GM12878 (cell line): ENCODE measurements at regions of chr2 and their contacts with region 1.

Region 1: DNA sequence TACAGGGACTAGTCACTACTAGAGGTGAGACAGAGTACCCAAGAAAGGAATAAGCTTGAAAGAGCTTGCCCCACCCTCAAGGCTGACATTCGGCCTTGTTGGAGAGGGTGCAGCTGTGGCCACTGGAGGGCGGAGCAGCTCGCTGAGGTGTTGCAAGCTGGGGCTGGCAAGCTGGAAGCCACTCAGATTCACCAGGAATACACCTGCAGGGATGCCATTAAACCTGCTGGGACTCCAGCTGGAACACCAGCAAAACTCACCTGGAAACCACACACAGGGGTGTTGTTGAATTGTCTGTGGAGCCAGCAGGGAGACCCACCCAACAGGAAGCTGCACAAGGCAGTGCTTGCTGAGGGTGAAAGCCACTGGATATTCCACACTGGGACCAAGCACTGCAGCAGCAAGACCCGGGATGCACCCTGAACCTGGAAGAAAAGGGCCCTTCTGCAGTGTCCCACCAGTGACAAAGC is 26.1 kb downstream of the KCTD18 start:
- DNase-seq: no peak
- ATAC-seq: peak; percentile 86
- H3K4me3 ChIP-seq: no peak overlapping the region
- H3K27ac ChIP-seq: no peak overlapping the region
- H3K4me1 ChIP-seq: no peaks in the 10 kb centered on the region
- H3K27me3 ChIP-seq: no peaks in the 10 kb centered on the region
- CTCF ChIP-seq: peak; percentile 69 to 80 (median 78)
- EP300 ChIP-seq: no peak
- POLR2A ChIP-seq: no peak
- RAD21 ChIP-seq: peak; percentile 65

Region 2: DNA sequence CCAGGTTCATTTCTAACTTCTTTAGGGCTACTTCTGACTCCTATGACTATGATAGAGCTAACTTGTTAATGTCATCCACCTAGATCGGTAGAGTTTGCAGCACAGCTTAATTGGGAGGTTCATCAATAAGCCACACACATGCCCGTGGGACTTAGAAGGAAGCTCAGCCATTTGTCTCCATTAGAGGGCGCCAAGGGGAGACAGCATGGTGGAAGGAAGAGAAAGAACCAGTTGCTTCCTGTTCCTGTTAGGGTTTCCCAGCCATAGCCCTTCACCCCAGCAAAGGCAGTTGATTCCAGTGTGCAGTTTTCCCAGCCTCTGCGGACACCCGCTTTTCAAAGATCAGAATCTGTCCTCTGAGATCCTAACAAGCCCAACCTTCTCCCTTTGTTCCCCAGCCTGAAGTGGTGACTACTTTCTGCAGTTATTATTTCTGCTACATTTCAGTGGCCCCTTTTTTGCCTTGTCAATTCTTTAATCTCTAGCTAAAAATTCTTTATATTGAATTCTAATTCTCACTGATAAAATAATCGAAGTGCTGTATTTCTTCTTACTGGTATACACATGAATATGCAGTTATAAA is 498.0 kb before region 1 on chr2:
- CTCF ChIA-PET with region 1: interaction called, 104 read pairs
- POLR2A ChIA-PET with region 1: no interaction called
- RAD21 ChIA-PET with region 1: interaction called, 68 read pairs
- SMC1A ChIA-PET with region 1: interaction called, 53 read pairs
- in situ Hi-C with region 1: no loop called
- intact Hi-C with region 1: loop called (anchors 1 kb)
- DNase-seq: no peak
- ATAC-seq: peak; percentile 91
- H3K4me3 ChIP-seq: no peak overlapping the region
- H3K27ac ChIP-seq: no peak overlapping the region
- H3K4me1 ChIP-seq: no peaks in the 10 kb centered on the region
- H3K27me3 ChIP-seq: no peaks in the 10 kb centered on the region
- CTCF ChIP-seq: peak; percentile 34 to 64 (median 58)
- EP300 ChIP-seq: no peak
- POLR2A ChIP-seq: no peak
- RAD21 ChIP-seq: peak; percentile 45

Region 3: DNA sequence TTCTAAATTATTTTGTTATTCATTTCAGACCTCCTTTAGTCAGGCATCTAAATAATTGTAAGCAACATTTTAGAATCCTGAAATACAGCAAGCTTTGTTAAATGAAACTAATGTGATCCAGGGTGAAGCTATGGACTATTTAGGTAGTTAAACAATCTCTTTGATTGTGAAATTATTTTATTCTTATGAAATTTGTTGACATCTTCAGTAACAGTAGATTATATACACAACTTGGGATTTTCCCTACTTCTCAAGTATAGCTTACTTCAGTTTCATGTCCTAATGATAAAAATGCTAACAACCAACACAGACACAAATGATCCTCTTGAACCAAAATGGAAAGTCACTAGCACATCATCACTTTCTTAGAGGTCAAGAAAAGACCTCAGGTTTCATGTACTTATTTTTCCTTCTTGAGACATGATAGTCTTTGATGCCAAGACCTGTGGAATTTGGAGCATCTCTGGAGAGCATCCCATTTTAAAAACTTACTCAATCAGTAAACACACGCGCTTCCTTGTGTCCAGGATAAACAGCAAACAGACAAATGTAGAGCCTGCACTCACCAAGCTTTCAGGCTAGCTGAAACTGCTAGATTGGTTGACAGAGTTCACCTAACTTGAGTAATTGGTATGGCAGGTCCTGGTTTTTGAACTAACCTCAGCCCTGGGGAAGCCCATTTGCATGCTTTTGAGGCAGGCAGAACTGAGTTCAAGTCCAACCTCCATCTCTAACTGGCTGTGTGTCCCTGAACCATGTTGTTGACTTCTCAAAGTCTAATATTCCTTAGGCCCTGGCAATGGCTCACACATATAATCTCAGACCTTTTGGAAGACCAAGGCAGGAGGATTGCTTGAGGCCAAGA is 21.7 kb before region 1 on chr2:
- CTCF ChIA-PET with region 1: interaction called, 37 read pairs
- POLR2A ChIA-PET with region 1: no interaction called
- RAD21 ChIA-PET with region 1: interaction called, 31 read pairs
- SMC1A ChIA-PET with region 1: interaction called, 11 read pairs
- in situ Hi-C with region 1: no loop called
- intact Hi-C with region 1: no loop called
- DNase-seq: no peak
- ATAC-seq: peak; percentile 48
- H3K4me3 ChIP-seq: no peak overlapping the region
- H3K27ac ChIP-seq: no peak overlapping the region
- H3K4me1 ChIP-seq: no peaks in the 10 kb centered on the region
- H3K27me3 ChIP-seq: no peaks in the 10 kb centered on the region
- CTCF ChIP-seq: no peak
- EP300 ChIP-seq: no peak
- POLR2A ChIP-seq: no peak
- RAD21 ChIP-seq: no peak

Region 4: DNA sequence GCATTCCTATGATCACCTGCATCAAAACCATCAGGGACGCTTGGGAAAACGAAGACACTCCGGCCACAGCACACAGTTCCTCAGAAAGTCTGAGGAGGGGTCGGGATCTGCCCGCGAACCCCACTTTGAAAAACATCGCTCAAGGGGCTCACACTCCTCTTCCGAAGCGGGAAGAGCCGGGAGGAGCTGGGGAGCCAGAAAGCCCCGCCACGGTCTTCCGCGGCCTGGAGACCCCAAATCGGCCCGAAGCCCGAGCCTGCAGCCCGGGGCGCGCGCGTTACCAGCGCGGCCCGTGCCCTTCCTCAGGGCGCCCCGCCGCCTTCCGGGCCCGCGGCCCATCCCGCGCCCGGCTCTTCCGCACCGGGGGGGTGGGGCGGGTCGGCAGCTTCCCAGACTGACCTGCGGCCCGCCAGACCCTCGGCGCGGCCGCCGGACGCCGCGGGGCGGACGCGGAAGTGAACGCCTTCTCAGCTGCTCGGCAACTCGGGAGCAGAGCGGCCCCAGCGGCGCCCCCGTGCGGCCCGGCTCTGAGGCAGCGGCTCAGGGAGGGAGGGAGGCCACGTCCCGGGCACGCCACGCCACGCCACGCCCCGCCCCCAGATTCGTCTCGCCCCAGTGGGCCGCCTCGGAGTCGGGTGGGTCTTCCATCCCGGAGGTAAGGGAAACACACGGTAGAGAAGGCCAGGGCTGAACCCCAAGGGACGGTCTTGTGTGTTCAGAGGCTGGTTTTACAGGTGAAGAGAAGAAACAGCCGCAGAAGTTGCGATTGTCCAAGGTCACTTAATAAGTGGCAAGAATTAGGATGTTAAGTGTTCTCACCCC is 26.1 kb after region 1 on chr2 and contains the start of gene KCTD18:
- CTCF ChIA-PET with region 1: interaction called, 45 read pairs
- POLR2A ChIA-PET with region 1: interaction called, 5 read pairs
- RAD21 ChIA-PET with region 1: interaction called, 20 read pairs
- SMC1A ChIA-PET with region 1: interaction called, 9 read pairs
- in situ Hi-C with region 1: no loop called
- intact Hi-C with region 1: loop called (anchors 2 kb)
- DNase-seq: peak; percentile 62
- ATAC-seq: peak; percentile 99
- H3K4me3 ChIP-seq: peak within 1 kb of the TSS; percentile 86
- H3K27ac ChIP-seq: peak within 1 kb of the TSS; percentile 80
- H3K4me1 ChIP-seq: no peaks in the 10 kb centered on the region
- H3K27me3 ChIP-seq: no peaks in the 10 kb centered on the region
- CTCF ChIP-seq: peak; percentile 78 to 97 (median 79)
- EP300 ChIP-seq: no peak
- POLR2A ChIP-seq: peak; percentile 88
- RAD21 ChIP-seq: peak; percentile 23; the same call in 1 of the 2 replicates
- polyA plus RNA-seq, gene KCTD18: 1.4 to 3.7 TPM

Region 5: GRCh38 chr2:200703127-200703925 is 219.6 kb after region 1 on chr2:
- CTCF ChIA-PET with region 1: interaction called, 122 read pairs
- POLR2A ChIA-PET with region 1: interaction called, 3 read pairs
- RAD21 ChIA-PET with region 1: interaction called, 41 read pairs
- SMC1A ChIA-PET with region 1: interaction called, 89 read pairs
- in situ Hi-C with region 1: loop called (anchors 10 kb)
- intact Hi-C with region 1: loop called (anchors 2 kb)
- DNase-seq: peak; percentile 4
- ATAC-seq: peak; percentile 80
- H3K4me3 ChIP-seq: no peak overlapping the region
- H3K27ac ChIP-seq: no peak overlapping the region
- H3K4me1 ChIP-seq: no peaks in the 10 kb centered on the region
- H3K27me3 ChIP-seq: peaks cover 0 to 2% of the 10 kb centered on the region in 2 experiments; a peak in 1 of 4 replicates
- CTCF ChIP-seq: peak; percentile 22 to 66 (median 41); a peak in 4 of 6 replicates
- EP300 ChIP-seq: no peak
- POLR2A ChIP-seq: no peak
- RAD21 ChIP-seq: peak; percentile 85

Region 6: GRCh38 chr2:200922439-200922838 is 438.7 kb after region 1 on chr2:
- CTCF ChIA-PET with region 1: no interaction called
- POLR2A ChIA-PET with region 1: no interaction called
- RAD21 ChIA-PET with region 1: no interaction called
- SMC1A ChIA-PET with region 1: no interaction called
- in situ Hi-C with region 1: no loop called
- intact Hi-C with region 1: no loop called
- DNase-seq: no peak
- ATAC-seq: no peak
- H3K4me3 ChIP-seq: no peak overlapping the region
- H3K27ac ChIP-seq: no peak overlapping the region
- H3K4me1 ChIP-seq: no peaks in the 10 kb centered on the region
- H3K27me3 ChIP-seq: no peaks in the 10 kb centered on the region
- CTCF ChIP-seq: no peak
- EP300 ChIP-seq: no peak
- POLR2A ChIP-seq: no peak
- RAD21 ChIP-seq: no peak